HCT116 (cell line): ENCODE measurements at regions of chr1 and their contacts with region 1.

Region 1: DNA sequence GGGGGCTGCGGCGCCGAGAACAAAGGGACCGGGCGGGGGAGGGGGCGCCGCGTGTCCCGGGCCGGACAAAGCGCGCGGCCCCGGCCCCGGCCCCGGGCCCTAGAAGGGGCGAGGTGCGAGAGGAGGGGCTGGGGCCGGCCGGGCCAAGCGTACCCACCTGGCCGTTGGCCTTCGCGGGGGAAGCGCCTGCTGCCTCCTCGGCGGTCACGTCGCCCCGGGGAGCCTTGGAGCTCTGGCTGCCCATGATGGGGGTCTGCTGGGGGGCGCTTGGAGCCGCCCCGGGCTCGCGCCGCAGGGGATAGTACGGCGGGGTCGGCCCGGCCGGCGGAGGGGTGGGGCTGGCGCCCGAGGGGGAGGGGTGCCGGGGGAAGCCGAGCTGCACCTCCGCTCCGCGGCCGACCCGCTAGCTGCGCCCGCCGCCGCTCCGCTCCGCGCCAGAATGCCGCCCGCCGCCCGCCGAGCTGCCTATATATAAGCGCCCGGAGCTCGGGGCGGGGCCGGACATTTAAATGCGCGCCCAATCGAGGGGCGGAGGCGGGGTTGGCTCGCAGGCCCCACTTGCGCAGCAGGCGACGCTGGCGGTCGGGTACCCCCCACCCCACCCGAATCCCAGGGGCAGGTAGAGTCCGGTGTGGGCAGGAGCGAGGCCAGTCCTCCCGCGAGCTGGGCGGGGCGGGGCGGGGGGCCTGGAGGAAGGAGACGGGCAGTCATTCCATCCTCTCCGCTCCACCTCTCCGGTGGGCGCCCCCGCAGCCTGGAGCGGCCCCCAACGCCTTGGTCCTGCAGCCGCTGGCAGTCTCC is at the start of gene MARCKSL1:
- DNase-seq: peak; percentile 32
- ATAC-seq: peak; percentile 72
- H3K4me3 ChIP-seq: peak within 1 kb of the TSS; percentile 61 to 77
- H3K27ac ChIP-seq: peak within 1 kb of the TSS; percentile 70
- H3K4me1 ChIP-seq: peaks cover 22 to 62% of the 10 kb centered on the region in 2 experiments
- H3K27me3 ChIP-seq: no peaks in the 10 kb centered on the region
- CTCF ChIP-seq: no peak
- POLR2A ChIP-seq: peak; percentile 94
- RAD21 ChIP-seq: no peak
- total RNA-seq, gene MARCKSL1: 127 TPM

Region 2: DNA sequence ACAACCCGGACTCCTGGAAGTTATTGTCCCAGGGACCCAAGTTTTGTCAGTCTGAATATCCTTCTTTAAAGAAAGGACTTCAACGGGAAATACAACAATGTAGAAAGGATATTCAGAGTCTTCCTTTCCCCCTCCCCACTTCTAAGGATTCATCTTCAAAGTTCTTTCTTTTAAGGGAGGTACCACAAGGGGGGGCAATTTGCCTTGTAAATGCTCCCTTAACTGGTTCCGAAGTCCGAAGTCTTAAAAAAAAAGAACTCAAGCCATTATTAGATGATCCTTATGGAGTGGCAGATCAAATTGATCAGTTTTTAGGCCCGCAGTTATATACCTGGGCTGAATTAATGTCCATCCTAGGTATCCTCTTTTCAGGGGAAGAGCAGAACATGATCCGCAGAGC is 876.0 kb before region 1 on chr1:
- CTCF ChIA-PET with region 1: no interaction called
- POLR2A ChIA-PET with region 1: no interaction called
- RAD21 ChIA-PET with region 1: no interaction called
- intact Hi-C with region 1: no loop called
- DNase-seq: no peak
- ATAC-seq: no peak
- H3K4me3 ChIP-seq: no peak overlapping the region
- H3K27ac ChIP-seq: no peak overlapping the region
- H3K4me1 ChIP-seq: no peaks in the 10 kb centered on the region
- H3K27me3 ChIP-seq: no peaks in the 10 kb centered on the region
- CTCF ChIP-seq: peak; percentile 23 to 40 (median 26); a peak in 3 of 6 replicates
- POLR2A ChIP-seq: no peak
- RAD21 ChIP-seq: peak; percentile 54

Region 3: GRCh38 chr1:32351399-32352238 is 15.6 kb after region 1 on chr1:
- CTCF ChIA-PET with region 1: interaction called, 8 read pairs
- POLR2A ChIA-PET with region 1: interaction called, 22 read pairs
- RAD21 ChIA-PET with region 1: no interaction called
- intact Hi-C with region 1: no loop called
- DNase-seq: peak; percentile 84
- ATAC-seq: peak; percentile 94
- H3K4me3 ChIP-seq: peak overlapping the region; percentile 69 to 78
- H3K27ac ChIP-seq: peak overlapping the region; percentile 89
- H3K4me1 ChIP-seq: peaks cover 5 to 21% of the 10 kb centered on the region in 2 experiments; a peak in 3 of 4 replicates
- H3K27me3 ChIP-seq: no peaks in the 10 kb centered on the region
- CTCF ChIP-seq: no peak
- POLR2A ChIP-seq: peak; percentile 60
- RAD21 ChIP-seq: no peak